Activated B cell treated with CpG ODN at 0.5 μM for 24 hours (primary cell): ENCODE measurements at regions of chr6 and their contacts with region 1.

Region 1: DNA sequence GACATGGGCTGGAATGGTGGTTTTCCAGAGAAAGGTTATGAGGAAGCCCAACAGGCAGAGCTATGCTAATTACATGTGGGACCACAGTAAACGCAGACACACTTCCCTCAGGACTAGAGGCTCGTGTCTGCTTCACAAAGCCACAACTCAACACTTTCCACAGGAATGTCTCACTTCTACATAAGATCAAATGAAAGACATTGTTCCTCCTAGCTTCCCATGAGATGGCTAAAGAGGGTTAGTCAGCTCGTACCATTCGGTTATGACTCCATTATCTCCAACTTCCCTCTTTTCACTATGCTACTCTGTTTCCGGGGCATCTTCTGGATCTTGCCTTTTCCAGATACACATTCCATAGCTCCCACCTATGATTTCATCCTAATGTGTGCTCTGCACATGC is 29.1 kb upstream of the ZC3H12D start:
- DNase-seq: no peak
- ATAC-seq: no peak
- H3K4me3 Mint-ChIP-seq: no peak overlapping the region
- H3K27ac Mint-ChIP-seq: peak overlapping the region; percentile 50
- H3K4me1 Mint-ChIP-seq: peaks cover 23% of the 10 kb centered on the region
- H3K27me3 Mint-ChIP-seq: no peaks in the 10 kb centered on the region
- CTCF ChIP-seq: no peak

Region 2: DNA sequence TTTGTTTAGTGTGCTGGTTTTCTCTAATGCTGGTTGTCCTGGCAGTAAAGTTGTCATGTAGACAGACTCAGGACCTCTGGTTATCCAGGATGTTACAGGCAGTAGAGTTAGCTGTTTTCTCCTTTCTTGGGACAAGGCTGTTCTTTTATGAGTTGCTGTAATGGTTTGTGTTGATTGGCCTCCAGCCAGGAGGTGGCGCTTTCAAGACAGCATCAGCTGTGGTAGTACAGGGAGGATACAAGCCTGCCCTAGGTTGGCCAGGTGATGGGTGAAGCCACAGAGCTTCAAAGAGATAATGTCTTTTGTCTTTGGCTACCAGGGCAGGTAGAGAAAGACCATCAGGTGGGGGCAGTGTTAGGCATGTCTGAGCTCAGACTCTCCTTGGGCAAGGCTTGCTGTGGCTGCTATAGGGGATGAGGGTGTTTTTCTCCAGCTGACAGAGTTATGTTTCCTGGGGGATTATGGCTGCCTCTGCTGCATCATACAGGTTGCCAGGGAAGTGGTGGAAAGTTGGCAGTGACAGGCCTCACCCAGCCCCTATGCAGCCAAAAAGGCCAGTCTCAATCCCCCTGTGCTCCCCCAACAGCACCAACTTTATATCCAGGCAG is 323.6 kb before region 1 on chr6:
- CTCF ChIA-PET with region 1: interaction called, 20 read pairs
- POLR2A ChIA-PET with region 1: no interaction called
- intact Hi-C with region 1: loop called (anchors 1 kb)
- DNase-seq: peak; percentile 56
- ATAC-seq: peak; percentile 82
- H3K4me3 Mint-ChIP-seq: no peak overlapping the region
- H3K27ac Mint-ChIP-seq: no peak overlapping the region
- H3K4me1 Mint-ChIP-seq: peaks cover 9% of the 10 kb centered on the region
- H3K27me3 Mint-ChIP-seq: no peaks in the 10 kb centered on the region
- CTCF ChIP-seq: no peak

Region 3: DNA sequence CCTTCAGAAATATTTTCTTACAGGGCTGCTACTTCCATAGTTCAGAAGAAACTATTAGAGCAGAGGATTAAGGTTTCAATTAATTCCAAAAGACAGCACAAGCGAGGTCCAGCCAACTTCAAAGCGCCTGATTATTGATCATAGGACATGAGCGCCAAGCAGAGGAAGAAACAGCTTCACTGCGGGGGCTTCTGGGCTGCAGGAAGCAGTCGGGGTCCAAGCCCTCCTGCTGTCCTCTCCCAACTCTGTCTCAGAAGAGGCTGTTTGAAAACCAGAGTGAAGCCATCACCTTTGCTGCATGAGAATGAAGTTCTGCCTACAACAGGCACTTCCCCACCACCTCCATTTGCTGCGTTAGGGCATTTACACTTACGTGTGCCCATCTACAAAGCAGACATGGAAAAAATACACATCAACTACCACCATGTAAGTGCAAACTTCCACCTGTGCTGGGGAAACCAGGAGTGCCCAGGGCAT is 89.9 kb before region 1 on chr6:
- CTCF ChIA-PET with region 1: no interaction called
- POLR2A ChIA-PET with region 1: no interaction called
- intact Hi-C with region 1: no loop called
- DNase-seq: no peak
- ATAC-seq: no peak
- H3K4me3 Mint-ChIP-seq: no peak overlapping the region
- H3K27ac Mint-ChIP-seq: no peak overlapping the region
- H3K4me1 Mint-ChIP-seq: peaks cover 2% of the 10 kb centered on the region
- H3K27me3 Mint-ChIP-seq: no peaks in the 10 kb centered on the region
- CTCF ChIP-seq: no peak

Region 4: GRCh38 chr6:149468179-149468578 is 45.7 kb before region 1 on chr6:
- CTCF ChIA-PET with region 1: interaction called, 31 read pairs
- POLR2A ChIA-PET with region 1: interaction called, 9 read pairs
- intact Hi-C with region 1: loop called (anchors 1 kb)
- DNase-seq: peak; percentile 37
- ATAC-seq: peak; percentile 48
- H3K4me3 Mint-ChIP-seq: peak overlapping the region; percentile 83
- H3K27ac Mint-ChIP-seq: peak overlapping the region; percentile 95
- H3K4me1 Mint-ChIP-seq: peaks cover 95% of the 10 kb centered on the region
- H3K27me3 Mint-ChIP-seq: no peaks in the 10 kb centered on the region
- CTCF ChIP-seq: no peak

Region 5: DNA sequence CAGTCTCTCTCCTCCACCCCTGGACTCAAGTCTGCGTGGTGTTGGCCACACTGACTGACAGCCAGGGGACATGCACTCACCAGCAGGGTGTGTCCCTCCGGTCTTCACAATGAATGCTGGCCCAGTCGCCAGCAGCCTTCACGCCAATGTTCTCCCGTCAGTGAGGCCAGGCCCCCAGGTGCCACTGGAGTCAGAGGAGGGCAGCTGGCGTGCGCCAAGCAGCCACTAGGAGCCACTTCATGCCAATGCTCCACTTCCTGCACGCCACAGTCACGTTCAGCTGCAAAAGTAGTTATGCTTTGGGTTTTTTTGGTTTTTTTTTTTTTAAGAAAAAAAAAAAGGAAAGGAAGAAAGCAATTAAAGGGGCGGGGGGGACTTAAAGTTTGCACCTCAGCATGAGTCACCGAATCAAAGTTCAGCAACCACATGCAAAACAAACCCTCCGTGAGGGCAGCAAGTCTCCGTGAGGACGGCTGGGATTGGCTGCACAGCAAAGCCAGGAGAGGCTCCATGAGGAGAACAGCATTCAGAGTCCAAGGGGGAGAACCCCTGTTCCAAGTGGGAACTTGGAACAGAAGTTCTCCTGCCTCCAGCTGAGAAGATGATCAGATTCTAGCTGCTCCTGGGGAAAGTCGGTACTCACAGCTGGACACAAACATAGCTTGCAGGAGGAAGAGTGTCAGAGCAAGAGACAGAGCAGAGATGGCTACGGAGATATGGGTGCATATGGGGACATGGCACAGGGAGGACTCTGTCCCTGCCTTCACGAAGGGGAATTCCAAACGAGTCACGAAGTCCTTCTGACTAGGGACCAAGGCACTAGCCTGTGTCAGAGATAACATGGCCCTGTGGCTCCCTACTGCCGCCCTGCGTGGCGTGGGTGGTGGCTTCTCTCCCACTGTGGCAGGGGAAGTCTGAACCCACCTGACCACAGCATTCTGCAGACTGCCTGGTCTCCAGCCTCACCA is 28.9 kb before region 1 on chr6 and contains the start of gene ZC3H12D:
- CTCF ChIA-PET with region 1: interaction called, 15 read pairs
- POLR2A ChIA-PET with region 1: no interaction called
- intact Hi-C with region 1: loop called (anchors 1 kb)
- DNase-seq: peak; percentile 75
- ATAC-seq: peak; percentile 47
- H3K4me3 Mint-ChIP-seq: peak within 1 kb of the TSS; percentile 97
- H3K27ac Mint-ChIP-seq: peak within 1 kb of the TSS; percentile 99
- H3K4me1 Mint-ChIP-seq: peaks cover 87% of the 10 kb centered on the region
- H3K27me3 Mint-ChIP-seq: no peaks in the 10 kb centered on the region
- CTCF ChIP-seq: no peak
- total RNA-seq, gene ZC3H12D: 184 and 225 TPM in 2 replicates

Region 6: DNA sequence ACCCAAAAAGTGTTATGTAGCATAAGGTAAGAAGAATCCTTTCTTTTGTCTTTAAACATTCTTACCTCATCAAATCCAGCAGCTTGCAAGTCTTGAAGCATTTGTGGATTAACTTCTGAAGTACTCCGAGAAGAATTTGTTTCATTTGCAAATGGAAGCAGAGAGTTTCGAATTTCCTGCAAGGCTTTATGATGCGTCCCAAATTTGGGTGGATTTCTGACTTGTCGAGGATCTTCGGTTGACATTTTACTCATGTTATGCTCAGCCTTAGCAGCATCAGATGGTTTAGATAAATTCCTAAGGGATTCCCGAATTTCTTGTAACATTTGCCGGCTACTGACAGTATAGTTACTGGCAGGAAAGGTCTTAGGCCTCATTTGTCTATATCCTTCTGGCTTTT is 187.8 kb after region 1 on chr6:
- CTCF ChIA-PET with region 1: no interaction called
- POLR2A ChIA-PET with region 1: no interaction called
- intact Hi-C with region 1: no loop called
- DNase-seq: no peak
- ATAC-seq: no peak
- H3K4me3 Mint-ChIP-seq: no peak overlapping the region
- H3K27ac Mint-ChIP-seq: no peak overlapping the region
- H3K4me1 Mint-ChIP-seq: peaks cover 12% of the 10 kb centered on the region
- H3K27me3 Mint-ChIP-seq: no peaks in the 10 kb centered on the region
- CTCF ChIP-seq: no peak